H1 (cell line): ENCODE measurements at regions of chr12 and their contacts with region 1.

Region 1: DNA sequence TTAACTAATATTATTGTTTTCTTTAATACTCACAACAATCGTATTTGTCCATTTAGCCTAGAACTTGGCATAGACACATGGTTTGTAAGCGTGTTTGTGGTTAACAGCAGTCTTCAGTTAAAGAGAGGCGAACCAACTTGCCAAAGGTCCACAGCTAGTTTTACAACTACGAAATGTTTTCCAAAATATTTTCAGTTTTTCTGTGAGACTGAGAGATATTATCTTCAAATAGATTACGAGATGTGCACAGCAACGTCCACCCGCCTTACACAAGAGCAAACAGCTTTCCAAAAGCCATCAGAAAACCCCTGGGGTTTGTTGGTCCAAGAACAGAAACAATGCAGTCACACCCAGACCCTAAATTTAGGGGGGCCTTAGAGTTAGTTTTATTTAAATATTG is 58.6 kb upstream of the RASSF3 start:
- DNase-seq: no peak
- H3K4me3 ChIP-seq: no peak overlapping the region
- H3K27ac ChIP-seq: no peak overlapping the region
- H3K4me1 ChIP-seq: no peaks in the 10 kb centered on the region; a peak in 3 of 7 replicates
- H3K27me3 ChIP-seq: no peaks in the 10 kb centered on the region
- CTCF ChIP-seq: no peak
- EP300 ChIP-seq: no peak
- POLR2A ChIP-seq: no peak
- RAD21 ChIP-seq: no peak

Region 2: GRCh38 chr12:64522316-64522715 is 29.4 kb before region 1 on chr12:
- CTCF ChIA-PET with region 1: interaction called, 24 read pairs
- POLR2A ChIA-PET with region 1: no interaction called
- DNase-seq: no peak
- H3K4me3 ChIP-seq: no peak overlapping the region
- H3K27ac ChIP-seq: peak overlapping the region; percentile 52; the same call in 1 of the 2 replicates
- H3K4me1 ChIP-seq: peaks cover 0 to 12% (median 10%) of the 10 kb centered on the region in 4 experiments; a peak in 6 of 7 replicates
- H3K27me3 ChIP-seq: no peaks in the 10 kb centered on the region
- CTCF ChIP-seq: no peak
- EP300 ChIP-seq: no peak
- POLR2A ChIP-seq: no peak
- RAD21 ChIP-seq: no peak

Region 3: GRCh38 chr12:64566732-64567399 is 15.2 kb after region 1 on chr12:
- CTCF ChIA-PET with region 1: interaction called, 27 read pairs
- POLR2A ChIA-PET with region 1: interaction called, 3 read pairs
- DNase-seq: peak in 1 of 2 experiments; percentile 48
- H3K4me3 ChIP-seq: no peak overlapping the region
- H3K27ac ChIP-seq: no peak overlapping the region
- H3K4me1 ChIP-seq: peaks cover 5 to 15% (median 11%) of the 10 kb centered on the region in 4 experiments; a peak in 6 of 7 replicates
- H3K27me3 ChIP-seq: no peaks in the 10 kb centered on the region
- CTCF ChIP-seq: no peak
- EP300 ChIP-seq: no peak
- POLR2A ChIP-seq: no peak
- RAD21 ChIP-seq: no peak

Region 4: DNA sequence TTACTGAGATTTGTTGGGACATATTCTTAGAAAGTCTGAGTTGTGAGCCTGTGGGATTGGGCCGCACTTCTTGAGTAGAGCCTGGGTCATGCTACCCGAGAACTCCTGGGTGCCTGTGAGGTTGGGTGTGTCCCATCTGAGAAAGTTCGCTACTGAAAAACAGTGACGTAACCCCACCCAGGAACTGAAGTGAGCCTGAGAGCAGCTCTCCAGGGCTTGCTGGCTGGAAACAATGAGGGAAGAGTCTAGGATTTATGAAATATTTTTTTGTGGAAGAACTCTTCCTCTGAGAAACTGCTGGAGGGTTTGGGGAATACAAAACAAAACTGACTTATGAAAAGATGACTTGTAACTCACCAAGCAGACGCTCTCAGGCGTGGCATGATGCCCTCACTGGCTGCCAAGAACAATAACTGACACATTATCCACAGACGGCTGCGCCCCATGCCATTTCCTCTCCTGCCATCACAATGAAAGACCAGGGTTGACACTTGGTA is 127.8 kb after region 1 on chr12:
- CTCF ChIA-PET with region 1: interaction called, 10 read pairs
- POLR2A ChIA-PET with region 1: no interaction called
- DNase-seq: no peak
- H3K4me3 ChIP-seq: no peak overlapping the region
- H3K27ac ChIP-seq: no peak overlapping the region
- H3K4me1 ChIP-seq: peaks cover 2 to 16% (median 7%) of the 10 kb centered on the region in 4 experiments; a peak in 6 of 7 replicates
- H3K27me3 ChIP-seq: no peaks in the 10 kb centered on the region
- CTCF ChIP-seq: no peak
- EP300 ChIP-seq: no peak
- POLR2A ChIP-seq: no peak
- RAD21 ChIP-seq: no peak

Region 5: DNA sequence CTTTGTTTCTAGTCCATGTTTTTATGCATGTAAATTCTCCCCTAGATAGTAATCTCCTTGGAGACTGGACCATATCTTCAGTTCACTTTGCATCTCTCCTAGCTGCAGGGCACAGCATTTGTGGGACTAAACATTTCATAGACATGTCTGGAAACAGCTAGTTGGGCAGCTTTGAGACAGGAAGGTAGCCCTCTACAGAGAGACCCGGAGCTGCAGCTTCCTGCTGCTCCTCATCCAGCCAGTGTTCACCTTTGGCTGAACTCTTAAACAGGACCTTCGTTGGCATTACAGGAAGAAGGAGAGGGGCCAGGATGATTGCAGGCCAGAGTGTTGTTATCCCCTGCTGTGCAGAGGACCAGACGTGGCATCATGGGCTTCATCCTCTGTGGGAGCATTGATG is 154.6 kb after region 1 on chr12:
- CTCF ChIA-PET with region 1: interaction called, 132 read pairs
- POLR2A ChIA-PET with region 1: no interaction called
- DNase-seq: no peak
- H3K4me3 ChIP-seq: no peak overlapping the region
- H3K27ac ChIP-seq: no peak overlapping the region
- H3K4me1 ChIP-seq: no peaks in the 10 kb centered on the region
- H3K27me3 ChIP-seq: no peaks in the 10 kb centered on the region
- CTCF ChIP-seq: no peak
- EP300 ChIP-seq: no peak
- POLR2A ChIP-seq: no peak
- RAD21 ChIP-seq: no peak